ENCODE measurements at regions of chr1 and their contacts with region 1.

Region 1: DNA sequence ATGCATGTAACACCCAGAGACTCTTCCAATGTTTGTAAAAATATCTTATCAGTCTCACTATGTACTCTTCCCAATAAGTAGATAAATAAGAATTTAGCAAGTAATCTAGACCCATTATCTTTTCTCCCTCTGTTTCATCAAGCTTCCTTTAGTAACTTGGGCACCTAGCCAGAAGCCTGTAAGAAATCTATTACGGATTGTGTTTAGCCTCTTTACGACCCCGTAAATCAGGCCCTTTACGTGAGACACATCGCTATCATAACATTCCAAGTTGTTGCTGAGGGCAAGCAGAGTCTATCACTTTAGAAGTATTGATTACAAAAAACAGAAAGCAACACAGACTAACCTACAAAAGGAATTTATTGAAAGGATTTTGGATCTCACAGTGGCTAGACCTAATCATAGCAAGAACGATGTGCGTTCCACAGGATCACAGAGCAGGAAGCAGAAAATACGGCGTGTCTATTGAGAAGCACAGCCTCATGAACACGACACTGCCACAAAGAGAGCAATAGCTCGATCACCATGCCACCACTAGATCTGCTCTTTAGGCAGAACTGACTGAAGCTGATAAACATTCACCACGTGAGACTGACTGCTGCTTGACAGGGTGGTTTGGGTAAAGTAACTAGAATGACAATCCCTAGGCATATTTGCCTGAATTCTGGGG is 922.1 kb downstream of the AMY1C start:
- DNase-seq: no peak
- H3K4me3 ChIP-seq: no peak overlapping the region
- H3K27ac ChIP-seq: no peak overlapping the region
- H3K4me1 ChIP-seq: no peaks in the 10 kb centered on the region
- H3K27me3 ChIP-seq: no peaks in the 10 kb centered on the region
- CTCF ChIP-seq: no peak

Region 2: DNA sequence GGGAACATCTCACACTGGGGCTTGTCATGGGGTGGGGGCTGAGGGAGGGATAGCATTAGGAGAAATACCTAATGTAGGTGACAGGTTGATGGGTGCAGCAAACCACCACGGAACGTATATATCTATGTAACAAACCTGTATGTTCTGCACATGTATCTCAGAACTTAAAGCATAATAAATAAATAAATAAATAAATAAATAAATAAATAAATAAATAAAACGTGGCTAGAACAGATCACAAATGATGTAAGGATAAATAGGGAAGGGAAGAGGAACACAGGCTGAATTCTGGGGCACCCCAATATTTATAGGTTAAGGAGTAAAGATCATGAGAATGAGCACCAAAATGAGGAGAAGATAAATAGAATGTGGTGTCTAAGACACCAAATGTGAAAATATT is 329.9 kb before region 1 on chr1:
- CTCF ChIA-PET with region 1: no interaction called
- dilution Hi-C with region 1: no loop called
- in situ Hi-C with region 1: no loop called
- intact Hi-C with region 1: no loop called
- DNase-seq: no peak
- H3K4me3 ChIP-seq: no peak overlapping the region
- H3K27ac ChIP-seq: no peak overlapping the region
- H3K4me1 ChIP-seq: no peaks in the 10 kb centered on the region
- H3K27me3 ChIP-seq: no peaks in the 10 kb centered on the region
- CTCF ChIP-seq: no peak

Region 3: DNA sequence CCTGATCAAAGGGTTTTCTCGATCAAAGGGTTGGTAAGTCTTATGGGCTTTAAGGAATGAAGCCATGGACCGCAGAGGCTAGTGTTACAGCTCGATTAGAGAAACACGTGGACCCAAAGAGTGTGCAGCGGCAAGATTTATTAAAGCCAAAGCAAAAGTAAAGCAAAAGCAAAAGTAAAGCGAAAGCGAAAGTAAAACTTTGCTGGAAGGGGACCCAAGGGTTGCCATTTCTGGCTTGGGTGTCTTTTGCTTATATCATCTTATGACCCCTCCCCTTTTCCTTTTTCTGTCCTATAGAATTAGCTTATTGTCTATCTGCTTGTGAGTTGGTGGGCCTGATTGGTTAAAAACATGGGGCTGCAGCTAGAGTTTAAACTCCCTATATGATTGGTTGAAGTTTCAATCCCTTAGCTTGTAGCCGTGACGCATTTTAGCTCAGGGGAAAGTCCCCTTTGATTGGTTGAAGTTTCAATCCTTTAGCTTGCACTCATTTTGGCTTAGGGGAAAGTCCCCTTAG is 34.9 kb after region 1 on chr1:
- CTCF ChIA-PET with region 1: no interaction called
- dilution Hi-C with region 1: loop called (anchors 5 kb)
- in situ Hi-C with region 1: no loop called
- intact Hi-C with region 1: no loop called
- DNase-seq: no peak
- H3K4me3 ChIP-seq: no peak overlapping the region
- H3K27ac ChIP-seq: no peak overlapping the region
- H3K4me1 ChIP-seq: no peaks in the 10 kb centered on the region
- H3K27me3 ChIP-seq: no peaks in the 10 kb centered on the region
- CTCF ChIP-seq: no peak

Measured in mammary epithelial cell (primary cell).